ENCODE measurements at regions of chr19 and their contacts with region 1.

Region 1: GRCh38 chr19:3108775-3109174 is 14.6 kb downstream of the GNA11 start:
- DNase-seq: peak; percentile 80
- ATAC-seq: peak; percentile 81
- H3K4me3 Mint-ChIP-seq: no peak overlapping the region
- H3K27ac Mint-ChIP-seq: no peak overlapping the region
- H3K4me1 Mint-ChIP-seq: peaks cover 15% of the 10 kb centered on the region
- H3K27me3 Mint-ChIP-seq: no peaks in the 10 kb centered on the region

Region 2: GRCh38 chr19:2962045-2962561 is 146.7 kb before region 1 on chr19:
- CTCF ChIA-PET with region 1: interaction called, 54 read pairs
- POLR2A ChIA-PET with region 1: no interaction called
- DNase-seq: peak; percentile 75
- ATAC-seq: peak; percentile 79
- H3K4me3 Mint-ChIP-seq: peak overlapping the region; percentile 59
- H3K27ac Mint-ChIP-seq: peak overlapping the region; percentile 49
- H3K4me1 Mint-ChIP-seq: peaks cover 5% of the 10 kb centered on the region
- H3K27me3 Mint-ChIP-seq: no peaks in the 10 kb centered on the region

Region 3: GRCh38 chr19:3075895-3076431 is 32.8 kb before region 1 on chr19:
- CTCF ChIA-PET with region 1: interaction called, 47 read pairs
- POLR2A ChIA-PET with region 1: interaction called, 3 read pairs
- DNase-seq: peak; percentile 79
- ATAC-seq: peak; percentile 81
- H3K4me3 Mint-ChIP-seq: no peak overlapping the region
- H3K27ac Mint-ChIP-seq: no peak overlapping the region
- H3K4me1 Mint-ChIP-seq: peaks cover 2% of the 10 kb centered on the region
- H3K27me3 Mint-ChIP-seq: no peaks in the 10 kb centered on the region

Region 4: DNA sequence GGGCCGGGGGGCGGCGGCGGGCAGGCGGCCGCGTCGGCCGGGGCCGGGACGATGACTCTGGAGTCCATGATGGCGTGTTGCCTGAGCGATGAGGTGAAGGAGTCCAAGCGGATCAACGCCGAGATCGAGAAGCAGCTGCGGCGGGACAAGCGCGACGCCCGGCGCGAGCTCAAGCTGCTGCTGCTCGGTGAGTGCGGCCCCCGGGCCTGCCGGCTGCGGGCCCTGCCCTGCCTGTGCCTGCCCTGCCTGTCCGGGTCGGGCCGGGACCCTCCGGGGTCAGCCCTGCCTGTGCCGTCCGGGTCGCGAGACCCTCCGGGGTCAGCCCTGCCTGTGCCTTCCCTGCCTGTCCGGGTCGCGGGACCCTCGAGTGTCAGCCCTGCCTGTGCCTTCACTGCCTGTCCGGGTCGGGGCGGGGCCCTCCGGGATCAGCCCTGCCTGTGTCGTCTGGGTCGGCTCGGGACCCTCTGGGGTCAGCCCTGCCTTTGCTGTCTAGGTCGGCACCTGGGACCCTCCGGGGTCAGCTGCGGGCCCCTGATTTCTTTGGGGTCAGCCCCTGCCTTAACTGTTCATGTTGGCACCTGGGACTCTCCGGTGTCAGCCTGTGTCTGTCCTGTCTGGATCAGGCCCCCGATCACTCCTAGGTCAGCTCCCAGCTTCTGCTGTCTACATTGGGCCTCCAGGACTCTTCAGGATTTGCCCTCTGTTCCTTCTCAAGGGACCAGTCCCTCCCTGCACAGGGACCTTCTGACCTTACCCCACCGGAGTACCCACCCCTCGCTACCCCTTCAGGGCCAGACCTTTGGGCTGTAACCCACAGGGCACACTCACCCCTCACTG is 14.0 kb before region 1 on chr19:
- CTCF ChIA-PET with region 1: interaction called, 24 read pairs
- POLR2A ChIA-PET with region 1: no interaction called
- DNase-seq: peak; percentile 38
- ATAC-seq: peak; percentile 28
- H3K4me3 Mint-ChIP-seq: peak overlapping the region; percentile 46
- H3K27ac Mint-ChIP-seq: no peak overlapping the region
- H3K4me1 Mint-ChIP-seq: peaks cover 18% of the 10 kb centered on the region
- H3K27me3 Mint-ChIP-seq: peaks cover 33% of the 10 kb centered on the region

Region 5: DNA sequence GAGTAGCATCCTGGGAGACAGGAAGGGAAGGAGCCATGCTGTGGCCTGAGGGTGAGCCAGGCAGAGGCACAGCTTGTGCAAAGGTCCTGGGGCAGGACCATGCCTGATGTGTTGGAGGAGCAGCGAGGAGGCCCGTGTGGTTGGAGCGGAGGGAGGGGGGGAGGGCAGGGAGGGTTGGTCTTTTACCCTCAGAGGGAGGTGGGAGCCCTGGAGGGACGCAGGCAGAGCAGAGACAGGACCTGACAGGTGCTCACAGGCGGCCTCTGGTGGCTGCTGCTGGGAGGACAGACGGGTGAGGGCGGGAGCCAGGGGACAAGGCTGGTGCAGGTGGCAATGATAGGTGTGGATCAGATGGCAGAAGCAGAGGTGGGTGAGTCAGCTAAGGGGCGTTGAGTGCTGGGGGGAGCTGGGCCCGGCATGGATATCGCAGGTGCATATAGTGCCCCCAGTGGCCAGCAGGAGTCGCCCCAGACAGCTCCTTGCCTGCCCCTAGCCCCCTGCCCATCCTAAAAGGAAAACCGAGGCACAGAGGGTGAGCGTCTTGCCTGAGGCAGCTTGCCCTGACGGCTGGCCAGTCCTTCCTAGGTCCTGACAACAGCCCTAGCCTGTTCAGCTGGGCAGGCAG is 17.2 kb after region 1 on chr19:
- CTCF ChIA-PET with region 1: interaction called, 38 read pairs
- POLR2A ChIA-PET with region 1: no interaction called
- DNase-seq: peak; percentile 64
- ATAC-seq: peak; percentile 95
- H3K4me3 Mint-ChIP-seq: no peak overlapping the region
- H3K27ac Mint-ChIP-seq: no peak overlapping the region
- H3K4me1 Mint-ChIP-seq: peaks cover 12% of the 10 kb centered on the region
- H3K27me3 Mint-ChIP-seq: peaks cover 3% of the 10 kb centered on the region

Region 6: GRCh38 chr19:3163230-3163886 is 54.6 kb after region 1 on chr19:
- CTCF ChIA-PET with region 1: interaction called, 17 read pairs
- POLR2A ChIA-PET with region 1: no interaction called
- DNase-seq: peak; percentile 78
- ATAC-seq: peak; percentile 91
- H3K4me3 Mint-ChIP-seq: no peak overlapping the region
- H3K27ac Mint-ChIP-seq: peak overlapping the region; percentile 67
- H3K4me1 Mint-ChIP-seq: peaks cover 52% of the 10 kb centered on the region
- H3K27me3 Mint-ChIP-seq: no peaks in the 10 kb centered on the region

Region 7: DNA sequence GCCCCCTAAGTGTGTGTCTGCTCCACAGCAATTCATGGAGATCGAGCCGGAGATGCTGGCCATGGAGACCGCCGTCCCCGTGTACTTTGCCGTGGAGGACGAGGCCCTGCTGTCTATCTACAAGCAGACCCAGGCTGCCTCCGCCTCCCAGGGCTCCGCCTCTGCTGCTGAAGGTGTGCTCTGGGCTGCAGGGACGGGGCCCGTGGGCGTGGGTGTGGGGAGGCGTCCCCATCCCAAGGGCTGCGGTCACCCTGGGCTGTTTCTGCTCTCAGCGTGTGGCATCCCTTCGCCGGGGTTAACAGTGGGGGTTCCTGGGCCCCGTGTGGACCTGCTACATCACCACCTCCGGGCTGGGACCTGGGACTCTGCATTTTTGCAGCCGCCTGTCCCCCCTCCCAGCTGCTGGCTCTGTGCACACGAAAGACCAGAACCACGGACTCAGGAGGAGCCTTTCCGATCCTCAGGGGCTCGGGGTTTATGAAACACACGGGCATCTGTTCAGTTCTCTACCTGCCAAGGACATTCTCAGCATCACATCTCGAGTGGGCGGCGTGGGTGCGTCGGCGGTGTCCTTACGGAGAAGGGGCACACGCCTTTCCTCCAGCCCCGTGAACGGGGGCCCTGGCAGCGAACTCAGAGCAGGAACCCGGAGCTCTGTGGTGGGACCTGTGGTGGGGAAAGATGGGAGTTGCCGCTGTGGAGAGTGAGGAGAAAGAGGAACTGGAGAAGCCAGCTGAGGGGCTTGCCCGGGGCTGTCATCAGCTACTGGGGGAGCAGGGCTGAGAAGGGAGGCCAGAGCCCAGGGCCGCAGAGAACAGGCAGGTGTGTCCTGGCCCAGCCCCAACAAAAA is 84.7 kb after region 1 on chr19:
- CTCF ChIA-PET with region 1: no interaction called
- POLR2A ChIA-PET with region 1: no interaction called
- DNase-seq: no peak
- ATAC-seq: no peak
- H3K4me3 Mint-ChIP-seq: no peak overlapping the region
- H3K27ac Mint-ChIP-seq: no peak overlapping the region
- H3K4me1 Mint-ChIP-seq: peaks cover 15% of the 10 kb centered on the region
- H3K27me3 Mint-ChIP-seq: no peaks in the 10 kb centered on the region

Measured in activated CD8-positive, alpha-beta T cell treated with anti-CD3 and anti-CD28 coated beads, Interleukin-2, amount 10 ng/mL, durations not matched to agents 7 days and 5 days (primary cell).